Esophagus squamous epithelium (tissue), 5 donors: ENCODE measurements at regions of chr7 and their contacts with region 1.

Region 1: DNA sequence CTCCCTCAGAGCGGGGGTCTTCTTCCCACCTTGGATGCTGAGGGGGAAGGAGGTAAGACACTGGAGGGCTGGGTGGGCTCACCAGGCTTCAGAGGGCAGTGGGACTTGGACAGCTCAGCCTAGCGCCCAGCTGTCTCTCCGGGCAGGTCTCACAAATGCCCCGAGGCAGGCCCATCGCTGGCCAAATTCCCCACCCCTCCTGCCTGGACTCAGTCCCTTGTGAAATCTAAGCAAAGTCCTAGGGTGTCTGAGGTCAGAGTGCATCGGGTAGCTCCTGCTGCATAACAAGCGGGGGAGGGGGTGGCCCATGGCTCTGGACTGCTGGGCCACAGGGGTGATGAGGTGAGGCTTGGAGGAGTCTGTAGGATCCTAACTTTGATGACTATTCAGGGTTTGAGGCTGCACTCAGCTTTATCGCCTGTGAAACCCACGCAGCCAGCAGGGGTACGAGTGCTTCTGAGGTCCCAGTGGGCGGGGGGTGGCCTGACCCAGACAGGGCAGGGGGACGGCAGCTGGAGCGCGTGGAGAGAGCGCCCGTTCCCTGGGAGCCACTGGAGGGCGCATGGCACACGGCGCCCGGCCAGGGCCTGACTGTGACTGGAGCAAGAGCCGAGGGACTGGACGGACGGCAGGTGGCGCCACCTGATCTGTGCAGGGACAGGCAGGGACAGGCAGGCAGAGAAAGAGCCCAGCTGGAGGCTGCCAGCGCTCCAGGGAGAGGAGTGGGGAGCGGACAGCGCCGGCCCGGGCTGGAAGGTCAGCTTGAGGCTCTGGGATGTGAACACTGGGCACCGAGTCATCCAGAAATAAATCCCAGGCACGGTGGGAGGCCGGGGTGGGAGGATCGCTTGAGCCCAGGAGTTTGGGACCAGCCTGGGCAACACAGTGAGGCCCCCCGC is 10.0 kb downstream of the CYP2W1 start:
- DNase-seq: peak; percentile 71
- H3K4me3 ChIP-seq: no peak overlapping the region
- H3K27ac ChIP-seq: no peak overlapping the region
- H3K4me1 ChIP-seq: peaks cover 4 to 40% (median 5%) of the 10 kb centered on the region in 3 donors
- H3K27me3 ChIP-seq: peaks cover 0 to 45% (median 2%) of the 10 kb centered on the region in 4 donors
- CTCF ChIP-seq: peak; percentile 99 to 100 (median 100)
- POLR2A ChIP-seq: no peak

Region 2: GRCh38 chr7:786472-787255 is 206.3 kb before region 1 on chr7:
- intact Hi-C with region 1: no loop called
- DNase-seq: no peak
- H3K4me3 ChIP-seq: no peak overlapping the region
- H3K27ac ChIP-seq: peak overlapping the region in 1 of 4 donors; percentile 2
- H3K4me1 ChIP-seq: peaks cover 0 to 6% (median 0%) of the 10 kb centered on the region in 3 donors
- H3K27me3 ChIP-seq: no peaks in the 10 kb centered on the region
- CTCF ChIP-seq: peak; percentile 54 to 96 (median 92)
- POLR2A ChIP-seq: no peak

Region 3: GRCh38 chr7:1065263-1066260 is 72.6 kb after region 1 on chr7:
- intact Hi-C with region 1: loop called (anchors 2 kb)
- DNase-seq: no peak
- H3K4me3 ChIP-seq: peak overlapping the region in 3 of 4 donors; percentile 11 to 46 (median 34)
- H3K27ac ChIP-seq: peak overlapping the region in 3 of 4 donors; percentile 47 to 75 (median 66)
- H3K4me1 ChIP-seq: peaks cover 45 to 61% (median 49%) of the 10 kb centered on the region in 3 donors
- H3K27me3 ChIP-seq: no peaks in the 10 kb centered on the region
- CTCF ChIP-seq: peak; percentile 89 to 97 (median 94)
- POLR2A ChIP-seq: no peak

Region 4: DNA sequence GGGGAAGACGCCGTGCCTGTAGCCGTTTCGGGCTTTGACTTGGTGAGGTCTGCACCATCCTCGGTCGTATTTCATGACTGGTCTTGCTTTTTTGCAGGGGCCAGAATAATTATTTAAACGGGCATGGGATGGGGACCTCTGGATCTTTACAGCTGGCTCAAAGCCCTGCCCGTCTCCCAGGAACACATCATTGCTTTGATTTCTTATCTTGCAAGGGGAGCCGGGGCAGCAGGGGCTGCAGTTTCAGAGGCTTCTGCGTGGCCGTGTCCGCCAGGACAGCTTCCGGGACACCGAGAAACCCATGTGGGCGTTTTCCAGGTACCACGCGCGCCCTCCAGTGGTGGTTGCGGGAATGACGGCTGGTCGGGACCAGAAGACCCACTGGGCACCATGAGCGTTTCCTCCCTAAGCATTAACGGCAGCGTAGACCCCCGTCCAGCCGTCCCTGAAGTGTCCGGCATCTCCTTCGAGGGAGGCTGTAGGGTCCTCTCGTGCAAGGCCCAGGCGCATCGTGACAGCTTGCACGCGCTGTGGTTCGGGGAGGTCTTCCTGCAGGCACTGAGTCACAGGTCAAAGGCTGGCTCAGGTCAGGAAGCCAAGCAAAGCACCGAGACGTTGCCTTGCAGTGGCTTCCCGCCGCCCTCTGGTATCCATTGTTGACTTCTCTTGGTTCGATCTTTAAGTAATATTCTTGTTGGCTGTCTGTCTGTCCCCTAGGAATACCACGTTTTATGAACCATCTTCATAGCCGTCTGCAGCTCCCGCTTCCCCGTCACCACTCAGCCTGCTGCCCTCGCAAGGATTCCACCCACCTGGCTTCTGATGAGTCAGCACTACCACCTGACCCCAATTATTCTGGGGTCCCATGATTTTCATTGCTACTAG is 183.3 kb after region 1 on chr7:
- intact Hi-C with region 1: loop called (anchors 10 kb)
- DNase-seq: peak; percentile 31
- H3K4me3 ChIP-seq: peak overlapping the region in 3 of 4 donors; percentile 28 to 48 (median 36)
- H3K27ac ChIP-seq: peak overlapping the region in 1 of 4 donors; percentile 52
- H3K4me1 ChIP-seq: peaks cover 0 to 16% (median 3%) of the 10 kb centered on the region in 3 donors
- H3K27me3 ChIP-seq: peaks cover 0 to 14% (median 0%) of the 10 kb centered on the region in 4 donors
- CTCF ChIP-seq: peak; percentile 84 to 94 (median 90)
- POLR2A ChIP-seq: no peak

Region 5: DNA sequence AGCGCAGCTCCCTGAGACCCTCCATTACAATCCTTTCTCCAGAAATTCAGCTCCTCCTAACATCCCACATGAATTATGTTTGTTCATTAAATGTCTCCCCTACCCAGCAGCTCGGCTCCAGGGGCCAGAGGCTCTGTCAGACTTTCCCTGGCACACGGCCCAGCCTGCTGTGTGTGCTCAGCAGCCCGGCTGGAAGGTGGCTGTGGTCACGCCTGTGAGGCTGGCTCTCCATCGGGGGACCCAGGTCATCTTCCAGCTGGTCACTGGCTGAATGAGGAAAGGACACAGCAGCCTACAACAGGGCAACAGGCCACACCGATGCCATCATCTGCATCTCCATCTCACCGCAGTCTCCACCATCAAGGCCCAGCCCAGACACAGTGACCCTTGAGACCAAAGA is 1020.0 kb after region 1 on chr7:
- intact Hi-C with region 1: no loop called
- DNase-seq: no peak
- H3K4me3 ChIP-seq: no peak overlapping the region
- H3K27ac ChIP-seq: no peak overlapping the region
- H3K4me1 ChIP-seq: peaks cover 0 to under 1% (median 0%) of the 10 kb centered on the region in 3 donors
- H3K27me3 ChIP-seq: no peaks in the 10 kb centered on the region
- CTCF ChIP-seq: no peak
- POLR2A ChIP-seq: no peak